Keratinocyte (primary cell): ENCODE measurements at regions of chr10 and their contacts with region 1.

Region 1: DNA sequence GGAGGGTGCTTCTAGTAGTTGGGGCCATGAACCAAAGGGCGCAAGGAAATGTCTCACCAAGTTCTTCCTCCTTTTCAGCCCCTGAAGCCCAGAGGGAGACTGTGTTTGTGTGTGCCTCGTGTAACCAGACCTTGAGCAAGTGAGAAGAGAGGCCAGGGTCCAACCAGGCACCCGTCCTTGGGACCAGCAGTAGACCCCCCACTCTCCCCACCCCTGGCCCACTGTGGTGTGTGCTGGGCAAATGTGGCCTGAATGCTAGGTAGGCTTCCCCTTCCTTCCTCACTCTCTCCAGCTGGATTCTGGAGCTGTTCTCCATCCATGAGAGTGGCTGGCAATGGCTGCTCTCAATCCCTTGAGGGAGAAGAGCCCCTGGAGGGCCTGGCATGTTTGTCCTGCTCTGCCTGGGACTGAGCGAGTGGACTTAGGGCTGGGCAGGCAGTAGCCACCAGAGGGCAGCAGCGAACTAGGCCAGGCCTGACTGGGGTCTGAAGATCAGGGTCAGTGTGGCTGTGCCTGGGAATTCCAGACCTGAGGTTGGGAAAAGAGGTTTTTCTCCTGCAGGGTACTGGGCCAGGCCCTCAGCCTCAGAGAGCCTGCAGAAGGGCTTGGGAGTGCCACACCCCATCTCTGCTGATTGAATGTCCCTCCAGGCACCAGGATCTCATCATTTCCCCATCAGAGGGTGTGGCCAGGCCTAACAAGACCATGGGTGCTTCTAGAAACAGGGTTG is 12.5 kb downstream of the SFRP5 start:
- DNase-seq: peak; percentile 9
- H3K4me3 ChIP-seq: no peak overlapping the region
- H3K27ac ChIP-seq: no peak overlapping the region
- H3K4me1 ChIP-seq: peaks cover 2% of the 10 kb centered on the region
- H3K27me3 ChIP-seq: no peaks in the 10 kb centered on the region
- CTCF ChIP-seq: peak; percentile 88 to 92 (median 90)

Region 2: GRCh38 chr10:97689559-97690020 is 69.7 kb before region 1 on chr10:
- dilution Hi-C with region 1: no loop called
- DNase-seq: peak; percentile 99
- H3K4me3 ChIP-seq: no peak overlapping the region
- H3K27ac ChIP-seq: peak overlapping the region; percentile 97
- H3K4me1 ChIP-seq: peaks cover 36% of the 10 kb centered on the region
- H3K27me3 ChIP-seq: no peaks in the 10 kb centered on the region
- CTCF ChIP-seq: no peak

Region 3: GRCh38 chr10:97869091-97870042 is 110.0 kb after region 1 on chr10:
- dilution Hi-C with region 1: loop called (anchors 25 kb)
- DNase-seq: no peak
- H3K4me3 ChIP-seq: no peak overlapping the region
- H3K27ac ChIP-seq: no peak overlapping the region
- H3K4me1 ChIP-seq: peaks cover 17% of the 10 kb centered on the region
- H3K27me3 ChIP-seq: no peaks in the 10 kb centered on the region
- CTCF ChIP-seq: peak; percentile 86 to 98 (median 96)